Spleen (tissue), 13 donors: ENCODE measurements at regions of chr9 and their contacts with region 1.

Region 1: DNA sequence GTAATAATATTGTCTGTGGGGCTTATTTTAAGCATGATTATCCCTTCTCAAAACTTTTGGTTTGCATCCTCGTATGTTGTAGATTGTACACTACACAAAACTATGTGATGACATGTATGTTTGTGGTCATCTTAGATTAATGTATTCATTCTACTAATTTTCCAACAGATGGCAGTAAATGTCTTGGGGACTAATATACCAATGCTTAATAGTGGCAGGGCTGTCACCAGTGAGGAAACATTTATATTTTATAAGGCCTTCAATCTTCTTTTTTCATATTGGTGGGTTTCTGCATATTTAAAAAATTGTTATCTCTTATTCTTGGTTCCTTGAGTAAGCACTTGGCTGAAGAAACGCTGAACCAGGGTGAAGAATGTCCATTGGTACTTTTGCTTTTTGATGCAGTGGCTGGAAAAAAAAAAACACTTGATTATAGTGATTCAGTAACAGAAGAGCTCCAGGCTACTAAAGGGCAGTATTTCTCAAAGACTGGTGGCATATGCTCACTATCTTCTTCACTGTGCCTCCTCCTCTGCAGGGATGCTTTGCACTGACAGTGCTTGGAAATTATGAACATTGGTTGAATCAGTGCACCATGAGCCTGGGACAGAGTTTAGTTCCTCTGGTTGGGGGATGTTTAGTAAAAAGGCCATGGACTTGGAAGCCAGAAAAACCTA is 530.3 kb downstream of the RASEF start:
- DNase-seq: no peak
- H3K4me3 ChIP-seq: no peak overlapping the region
- H3K27ac ChIP-seq: no peak overlapping the region
- H3K4me1 ChIP-seq: no peaks in the 10 kb centered on the region
- H3K27me3 ChIP-seq: no peaks in the 10 kb centered on the region
- CTCF ChIP-seq: peak in 6 of 11 experiments; percentile 11 to 45 (median 18)
- POLR2A ChIP-seq: no peak

Region 2: GRCh38 chr9:82216435-82216834 is 316.2 kb before region 1 on chr9:
- intact Hi-C with region 1: no loop called
- DNase-seq: no peak
- H3K4me3 ChIP-seq: no peak overlapping the region
- H3K27ac ChIP-seq: no peak overlapping the region
- H3K4me1 ChIP-seq: no peaks in the 10 kb centered on the region
- H3K27me3 ChIP-seq: no peaks in the 10 kb centered on the region
- CTCF ChIP-seq: no peak
- POLR2A ChIP-seq: no peak

Region 3: GRCh38 chr9:82302968-82303655 is 229.5 kb before region 1 on chr9:
- intact Hi-C with region 1: no loop called
- DNase-seq: no peak
- H3K4me3 ChIP-seq: no peak overlapping the region
- H3K27ac ChIP-seq: no peak overlapping the region
- H3K4me1 ChIP-seq: no peaks in the 10 kb centered on the region
- H3K27me3 ChIP-seq: no peaks in the 10 kb centered on the region
- CTCF ChIP-seq: no peak
- POLR2A ChIP-seq: no peak

Region 4: GRCh38 chr9:82606492-82607382 is 74.1 kb after region 1 on chr9:
- intact Hi-C with region 1: loop called (anchors 5 kb)
- DNase-seq: no peak
- H3K4me3 ChIP-seq: no peak overlapping the region
- H3K27ac ChIP-seq: no peak overlapping the region
- H3K4me1 ChIP-seq: no peaks in the 10 kb centered on the region
- H3K27me3 ChIP-seq: no peaks in the 10 kb centered on the region
- CTCF ChIP-seq: peak; percentile 26 to 69 (median 52)
- POLR2A ChIP-seq: no peak

Region 5: GRCh38 chr9:82961504-82962125 is 429.0 kb after region 1 on chr9:
- intact Hi-C with region 1: loop called (anchors 10 kb)
- DNase-seq: peak; percentile 75
- H3K4me3 ChIP-seq: no peak overlapping the region
- H3K27ac ChIP-seq: no peak overlapping the region
- H3K4me1 ChIP-seq: no peaks in the 10 kb centered on the region
- H3K27me3 ChIP-seq: peaks cover 0 to 17% (median 0%) of the 10 kb centered on the region in 7 donors
- CTCF ChIP-seq: peak in 10 of 11 experiments; percentile 60 to 75 (median 68)
- POLR2A ChIP-seq: no peak